Caco-2 (cell line): ENCODE measurements at regions of chr6 and their contacts with region 1.

Region 1: DNA sequence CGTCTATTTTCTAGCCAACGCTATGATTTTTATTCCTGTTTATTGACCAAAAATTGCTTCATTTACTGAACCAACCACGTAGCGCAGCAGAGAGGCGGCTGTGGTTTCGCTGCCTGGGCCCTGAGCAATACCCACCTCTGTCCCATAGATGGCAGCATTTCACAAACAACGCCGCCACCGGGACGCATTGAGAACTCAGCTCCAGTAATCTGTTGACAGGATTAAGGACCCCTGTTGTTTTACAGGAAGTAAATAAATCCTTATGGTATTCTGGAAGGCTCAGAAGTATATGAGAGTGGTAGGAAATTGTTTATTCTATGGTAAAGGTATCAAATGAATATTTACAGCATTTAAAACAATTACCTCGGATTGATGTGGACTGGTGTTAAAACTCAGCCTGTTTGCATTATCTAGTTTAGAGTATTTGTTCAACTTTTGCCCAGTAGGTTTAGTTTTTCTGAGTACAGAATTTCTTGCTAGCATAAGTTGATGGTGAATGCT is 547.9 kb upstream of the SLC35B3 start:
- DNase-seq: peak; percentile 55 to 74
- H3K4me3 ChIP-seq: no peak overlapping the region
- H3K4me3 Mint-ChIP-seq: no peak overlapping the region
- H3K27ac Mint-ChIP-seq: no peak overlapping the region
- H3K4me1 ChIP-seq: peaks cover 10% of the 10 kb centered on the region; the same call in 1 of the 2 replicates
- H3K4me1 Mint-ChIP-seq: peaks cover 7% of the 10 kb centered on the region
- H3K27me3 ChIP-seq: no peaks in the 10 kb centered on the region
- H3K27me3 Mint-ChIP-seq: no peaks in the 10 kb centered on the region
- CTCF ChIP-seq: peak; percentile 87 to 90

Region 2: DNA sequence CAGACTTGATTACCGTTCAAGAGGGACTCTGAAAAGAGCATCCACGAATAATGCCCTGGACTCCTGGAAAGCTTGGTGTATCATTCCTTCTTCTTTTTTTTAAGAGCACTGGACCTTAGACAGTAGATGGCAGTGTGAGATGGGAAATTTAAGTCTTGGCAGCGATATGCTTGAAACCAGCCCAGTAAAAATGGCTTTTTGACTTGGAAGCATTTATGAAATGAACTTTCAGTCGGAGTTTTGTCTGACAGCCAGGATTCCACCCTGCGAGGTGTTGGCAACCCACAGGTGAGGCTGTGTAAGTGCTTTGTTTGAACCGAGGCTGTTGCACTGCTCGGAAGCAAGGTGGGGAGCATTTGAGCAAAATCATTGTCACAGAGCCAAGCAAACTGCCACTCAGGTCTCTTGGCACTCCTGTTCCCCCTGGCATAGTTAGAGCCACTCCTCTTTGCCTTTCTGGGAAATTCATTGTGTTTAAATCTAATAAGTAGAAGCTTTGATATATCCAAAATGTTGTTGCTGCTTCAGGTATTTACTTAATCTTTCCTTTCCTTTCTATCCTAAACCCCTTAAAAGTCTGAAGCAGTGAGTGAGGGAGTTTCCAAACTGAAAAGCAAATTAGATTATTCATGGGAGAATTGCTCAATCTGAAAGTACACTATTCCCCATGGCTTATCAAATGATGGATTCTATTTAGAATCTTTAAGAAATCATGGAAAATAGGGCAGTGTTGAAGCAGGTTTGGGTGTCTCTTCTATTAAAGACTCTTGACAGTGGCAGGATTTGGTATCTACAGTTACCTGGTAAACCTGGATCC is 275.1 kb before region 1 on chr6:
- CTCF ChIA-PET with region 1: no interaction called
- POLR2A ChIA-PET with region 1: no interaction called
- intact Hi-C with region 1: loop called (anchors 2 kb)
- DNase-seq: peak in 1 of 2 experiments; percentile 53
- H3K4me3 ChIP-seq: no peak overlapping the region
- H3K4me3 Mint-ChIP-seq: peak overlapping the region; percentile 33
- H3K27ac Mint-ChIP-seq: peak overlapping the region; percentile 25
- H3K4me1 ChIP-seq: no peaks in the 10 kb centered on the region
- H3K4me1 Mint-ChIP-seq: peaks cover 10% of the 10 kb centered on the region
- H3K27me3 ChIP-seq: no peaks in the 10 kb centered on the region
- H3K27me3 Mint-ChIP-seq: no peaks in the 10 kb centered on the region
- CTCF ChIP-seq: peak; percentile 50 to 51

Region 3: GRCh38 chr6:9002833-9003232 is 19.6 kb after region 1 on chr6:
- CTCF ChIA-PET with region 1: no interaction called
- POLR2A ChIA-PET with region 1: no interaction called
- intact Hi-C with region 1: no loop called
- DNase-seq: no peak
- H3K4me3 ChIP-seq: no peak overlapping the region
- H3K4me3 Mint-ChIP-seq: no peak overlapping the region
- H3K27ac Mint-ChIP-seq: peak overlapping the region; percentile 34
- H3K4me1 ChIP-seq: peaks cover 41% of the 10 kb centered on the region
- H3K4me1 Mint-ChIP-seq: peaks cover 23% of the 10 kb centered on the region
- H3K27me3 ChIP-seq: no peaks in the 10 kb centered on the region
- H3K27me3 Mint-ChIP-seq: no peaks in the 10 kb centered on the region
- CTCF ChIP-seq: no peak

Region 4: DNA sequence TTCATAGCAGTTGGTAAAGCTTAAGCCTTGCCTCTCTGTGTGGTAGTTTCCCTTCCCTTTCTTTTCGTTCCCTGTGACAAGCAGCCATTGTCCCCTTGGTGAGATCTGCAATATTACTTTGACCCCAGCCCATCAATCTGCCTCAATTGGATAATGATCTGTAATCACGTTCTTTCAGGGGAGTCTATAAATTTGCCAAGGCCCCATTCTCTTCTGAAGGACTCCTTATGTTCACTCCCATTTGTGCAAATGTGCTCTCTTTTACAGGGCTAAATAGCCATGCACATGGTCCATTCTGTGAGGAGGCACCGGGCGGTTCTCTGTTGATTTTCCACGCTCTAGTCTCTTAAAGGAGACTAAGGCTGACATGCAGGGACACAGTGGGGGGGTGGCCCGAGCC is 112.5 kb after region 1 on chr6:
- CTCF ChIA-PET with region 1: no interaction called
- POLR2A ChIA-PET with region 1: no interaction called
- intact Hi-C with region 1: loop called (anchors 5 kb)
- DNase-seq: no peak
- H3K4me3 ChIP-seq: no peak overlapping the region
- H3K4me3 Mint-ChIP-seq: no peak overlapping the region
- H3K27ac Mint-ChIP-seq: no peak overlapping the region
- H3K4me1 ChIP-seq: no peaks in the 10 kb centered on the region
- H3K4me1 Mint-ChIP-seq: no peaks in the 10 kb centered on the region
- H3K27me3 ChIP-seq: no peaks in the 10 kb centered on the region
- H3K27me3 Mint-ChIP-seq: peaks cover 3% of the 10 kb centered on the region
- CTCF ChIP-seq: no peak

Region 5: GRCh38 chr6:9412951-9413559 is 429.8 kb after region 1 on chr6:
- CTCF ChIA-PET with region 1: no interaction called
- POLR2A ChIA-PET with region 1: no interaction called
- intact Hi-C with region 1: loop called (anchors 1 kb)
- DNase-seq: peak; percentile 52 to 56
- H3K4me3 ChIP-seq: no peak overlapping the region
- H3K4me3 Mint-ChIP-seq: no peak overlapping the region
- H3K27ac Mint-ChIP-seq: no peak overlapping the region
- H3K4me1 ChIP-seq: no peaks in the 10 kb centered on the region
- H3K4me1 Mint-ChIP-seq: no peaks in the 10 kb centered on the region
- H3K27me3 ChIP-seq: no peaks in the 10 kb centered on the region
- H3K27me3 Mint-ChIP-seq: no peaks in the 10 kb centered on the region
- CTCF ChIP-seq: peak; percentile 49 to 54

Region 6: DNA sequence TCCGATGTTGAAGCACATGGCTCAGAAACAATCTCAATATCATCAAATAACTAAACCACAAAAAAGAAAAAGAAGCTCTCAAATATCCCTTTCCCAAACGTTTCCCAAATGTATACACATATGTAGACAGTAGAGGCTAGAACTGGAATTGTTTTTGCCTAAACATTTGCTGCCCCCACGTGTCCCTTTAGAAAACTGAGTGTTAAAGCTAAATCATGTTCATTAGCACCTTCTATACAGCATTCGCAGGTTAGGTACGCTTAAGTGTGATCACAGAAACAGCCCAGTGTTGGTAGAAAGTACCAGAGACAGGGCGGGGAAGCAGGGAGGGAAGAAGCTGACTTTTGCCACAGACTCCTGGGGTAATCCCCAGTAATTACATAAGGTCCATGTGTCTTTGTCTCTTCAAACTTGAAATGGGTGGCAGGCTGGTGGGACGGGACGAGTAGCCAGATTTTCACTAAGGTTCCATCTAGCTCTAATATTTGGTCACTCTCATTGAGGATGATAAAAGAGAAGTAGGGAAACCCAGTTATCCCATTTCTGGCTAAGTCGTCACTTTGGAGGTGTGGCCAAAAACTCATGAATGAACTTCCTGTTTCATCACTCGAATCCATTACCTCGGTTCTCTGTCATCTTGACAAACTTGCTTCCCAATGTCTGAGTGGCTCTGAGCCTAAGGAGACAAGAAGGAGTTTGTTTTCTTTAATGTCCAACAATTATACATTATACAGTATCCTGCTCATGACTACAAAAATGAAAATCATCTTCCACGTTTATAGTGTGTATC is 1446.6 kb after region 1 on chr6:
- CTCF ChIA-PET with region 1: no interaction called
- POLR2A ChIA-PET with region 1: no interaction called
- intact Hi-C with region 1: loop called (anchors 5 kb)
- DNase-seq: peak in 1 of 2 experiments; percentile 57
- H3K4me3 ChIP-seq: no peak overlapping the region
- H3K4me3 Mint-ChIP-seq: no peak overlapping the region
- H3K27ac Mint-ChIP-seq: peak overlapping the region; percentile 61
- H3K4me1 ChIP-seq: 0 out of 2 replicates have a peak, but pooled peaks cover 3% of the 10 kb centered on the region
- H3K4me1 Mint-ChIP-seq: peaks cover 17% of the 10 kb centered on the region
- H3K27me3 ChIP-seq: no peaks in the 10 kb centered on the region
- H3K27me3 Mint-ChIP-seq: no peaks in the 10 kb centered on the region
- CTCF ChIP-seq: peak; percentile 61 to 68